Activated naive CD8-positive, alpha-beta T cell treated with anti-CD3 and anti-CD28 coated beads, Interleukin-2, amount 10 ng/mL, durations not matched to agents 7 days and 5 days (primary cell): ENCODE measurements at regions of chr21 and their contacts with region 1.

Region 1: DNA sequence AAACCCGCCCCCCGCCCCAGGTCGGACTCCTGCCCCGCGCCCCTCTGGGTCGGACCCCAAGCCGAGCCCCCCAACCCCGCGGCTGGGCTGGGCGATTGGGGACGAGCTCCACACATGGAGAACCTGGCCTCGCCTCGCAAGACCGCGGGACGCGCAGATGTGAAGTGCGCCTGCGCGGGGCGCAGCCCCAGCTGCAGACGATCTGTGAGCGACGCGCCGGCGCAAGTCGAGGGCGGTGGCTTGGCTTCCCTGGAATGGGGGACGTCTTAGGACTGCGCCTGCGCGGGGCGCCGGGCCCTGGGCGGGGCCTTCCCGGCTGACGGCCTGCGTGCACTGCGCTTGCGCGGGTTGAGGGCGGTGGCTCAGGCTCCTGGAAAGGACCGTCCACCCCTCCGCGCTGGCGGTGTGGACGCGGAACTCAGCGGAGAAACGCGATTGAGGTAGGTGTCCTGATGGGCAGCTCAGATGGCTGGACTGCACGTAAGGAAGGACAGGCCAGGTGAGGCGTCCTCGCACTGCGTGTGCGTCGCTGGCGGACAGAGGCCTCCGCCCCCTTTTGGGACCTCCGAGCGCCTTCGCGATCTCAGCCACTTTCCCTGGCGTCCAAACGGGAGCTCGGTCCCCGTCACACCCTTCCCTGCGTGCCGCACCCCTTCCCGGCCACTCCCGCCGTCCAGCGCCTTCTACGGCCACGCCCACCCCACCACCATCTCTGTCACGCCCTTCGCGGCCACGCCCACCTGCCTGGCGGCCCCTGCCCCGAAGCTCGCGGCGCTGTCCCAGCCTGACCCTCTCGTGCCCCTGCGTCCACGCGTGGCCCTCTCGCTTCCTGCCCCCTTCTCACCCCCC is at the start of gene PRMT2:
- DNase-seq: peak; percentile 100
- ATAC-seq: peak; percentile 92
- H3K4me3 Mint-ChIP-seq: peak within 1 kb of the TSS; percentile 89
- H3K27ac Mint-ChIP-seq: peak within 1 kb of the TSS; percentile 94
- H3K4me1 Mint-ChIP-seq: peaks cover 60% of the 10 kb centered on the region
- H3K27me3 Mint-ChIP-seq: no peaks in the 10 kb centered on the region
- total RNA-seq, gene PRMT2: 153 to 157 TPM

Region 2: GRCh38 chr21:46458315-46459023 is 177.1 kb before region 1 on chr21 and contains the start of gene DIP2A:
- POLR2A ChIA-PET with region 1: interaction called, 24 read pairs
- DNase-seq: peak; percentile 98
- ATAC-seq: peak; percentile 97
- H3K4me3 Mint-ChIP-seq: peak within 1 kb of the TSS; percentile 92
- H3K27ac Mint-ChIP-seq: peak within 1 kb of the TSS; percentile 91
- H3K4me1 Mint-ChIP-seq: peaks cover 44% of the 10 kb centered on the region
- H3K27me3 Mint-ChIP-seq: no peaks in the 10 kb centered on the region
- total RNA-seq, gene DIP2A: 78.7 to 78.8 TPM

Region 3: DNA sequence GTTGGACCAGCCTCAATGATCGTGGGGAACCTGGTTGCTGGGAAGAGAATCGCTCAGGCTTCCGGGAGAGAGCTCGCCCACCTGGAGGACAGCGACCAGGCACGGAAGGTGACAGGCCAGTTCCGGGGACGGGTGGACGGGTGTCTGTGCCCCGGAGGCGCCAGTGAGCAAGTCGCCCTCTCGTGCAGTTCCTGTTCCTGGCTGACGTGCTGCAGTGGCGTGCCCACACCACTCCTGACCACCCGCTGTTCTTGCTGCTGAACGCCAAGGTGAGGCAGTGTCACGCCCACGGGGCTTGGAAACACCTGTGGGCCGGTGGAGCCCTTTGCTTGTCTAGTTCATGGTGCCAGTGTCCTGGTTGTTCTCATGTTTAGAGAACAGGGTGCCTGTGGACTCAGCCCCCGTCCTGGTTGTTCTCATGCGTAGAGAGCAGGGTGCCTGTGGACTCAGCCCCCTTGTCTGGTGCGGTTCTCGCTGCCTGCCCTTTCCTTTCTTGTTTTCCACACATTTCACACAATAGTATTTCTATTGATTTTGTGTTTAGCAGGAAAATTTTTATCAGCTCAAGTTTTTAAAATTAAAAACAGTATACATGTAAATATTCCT is 83.8 kb before region 1 on chr21:
- POLR2A ChIA-PET with region 1: interaction called, 43 read pairs
- DNase-seq: peak; percentile 66
- ATAC-seq: peak; percentile 60
- H3K4me3 Mint-ChIP-seq: peak overlapping the region; percentile 76
- H3K27ac Mint-ChIP-seq: peak overlapping the region; percentile 93
- H3K4me1 Mint-ChIP-seq: peaks cover 40% of the 10 kb centered on the region
- H3K27me3 Mint-ChIP-seq: no peaks in the 10 kb centered on the region

Region 4: DNA sequence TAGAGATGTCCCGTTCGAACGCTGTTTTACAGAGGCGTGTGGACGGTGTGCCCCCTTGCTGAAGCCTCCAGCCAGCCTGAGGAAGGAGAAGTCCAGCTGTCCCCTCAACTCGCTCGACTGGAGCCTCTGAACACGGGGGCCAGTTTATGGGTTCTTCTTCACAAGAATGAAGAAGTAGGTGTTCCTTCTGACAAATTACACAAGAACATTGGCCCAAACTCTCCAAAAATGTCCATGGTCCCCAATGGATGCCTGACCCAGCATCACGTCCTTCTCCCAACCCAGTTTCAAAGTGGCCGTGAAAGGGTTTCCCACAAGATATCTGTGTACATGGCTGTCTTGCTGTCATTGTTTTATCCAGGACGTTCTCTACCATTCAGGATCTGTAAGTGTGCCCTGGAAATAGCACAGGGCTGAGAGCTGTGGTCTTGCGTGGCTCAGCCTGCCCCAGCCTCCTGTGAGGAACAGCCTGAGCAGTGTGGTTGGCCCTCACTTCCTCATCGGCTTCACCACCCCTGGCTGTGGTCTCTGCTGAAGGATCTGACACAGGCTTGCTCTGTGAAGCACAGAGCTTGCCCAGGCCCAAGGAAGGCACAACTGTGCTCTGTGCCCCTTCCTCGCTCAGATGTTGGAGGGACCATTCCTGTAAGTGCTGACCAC is 29.7 kb before region 1 on chr21:
- POLR2A ChIA-PET with region 1: interaction called, 59 read pairs
- DNase-seq: peak; percentile 75
- ATAC-seq: peak; percentile 95
- H3K4me3 Mint-ChIP-seq: peak overlapping the region; percentile 76
- H3K27ac Mint-ChIP-seq: peak overlapping the region; percentile 96
- H3K4me1 Mint-ChIP-seq: peaks cover 37% of the 10 kb centered on the region
- H3K27me3 Mint-ChIP-seq: no peaks in the 10 kb centered on the region

Region 5: DNA sequence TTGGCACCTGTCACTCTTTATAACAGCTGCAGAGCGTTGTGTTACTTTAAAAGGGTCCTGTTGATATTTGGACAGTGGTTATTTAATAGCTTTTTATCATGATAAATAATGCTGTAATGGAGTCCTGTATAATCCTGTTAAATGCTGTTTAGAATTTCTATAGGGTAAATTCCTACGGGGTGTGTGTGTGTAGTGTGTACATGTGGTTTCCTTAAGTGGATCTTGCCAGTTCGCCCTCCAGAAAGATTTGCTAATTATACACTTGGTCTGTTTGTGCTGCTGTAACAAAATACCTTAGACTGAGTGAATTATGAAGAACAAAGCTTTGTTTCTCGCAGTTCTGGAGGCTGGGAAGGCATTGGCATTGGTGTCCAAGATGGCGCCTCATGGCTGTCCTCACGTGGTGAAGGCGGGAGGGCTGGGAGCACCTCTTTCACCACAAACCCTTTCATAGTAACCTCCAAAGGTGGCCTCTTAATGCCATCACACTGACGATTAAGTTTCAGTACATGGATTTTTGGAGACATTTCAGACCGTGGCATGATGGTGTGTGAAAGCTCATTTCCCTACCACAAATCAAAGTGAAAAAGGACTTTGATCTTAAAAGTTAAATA is 11.1 kb after region 1 on chr21:
- POLR2A ChIA-PET with region 1: interaction called, 14 read pairs
- DNase-seq: no peak
- ATAC-seq: no peak
- H3K4me3 Mint-ChIP-seq: no peak overlapping the region
- H3K27ac Mint-ChIP-seq: no peak overlapping the region
- H3K4me1 Mint-ChIP-seq: peaks cover 11% of the 10 kb centered on the region
- H3K27me3 Mint-ChIP-seq: no peaks in the 10 kb centered on the region

Region 6: DNA sequence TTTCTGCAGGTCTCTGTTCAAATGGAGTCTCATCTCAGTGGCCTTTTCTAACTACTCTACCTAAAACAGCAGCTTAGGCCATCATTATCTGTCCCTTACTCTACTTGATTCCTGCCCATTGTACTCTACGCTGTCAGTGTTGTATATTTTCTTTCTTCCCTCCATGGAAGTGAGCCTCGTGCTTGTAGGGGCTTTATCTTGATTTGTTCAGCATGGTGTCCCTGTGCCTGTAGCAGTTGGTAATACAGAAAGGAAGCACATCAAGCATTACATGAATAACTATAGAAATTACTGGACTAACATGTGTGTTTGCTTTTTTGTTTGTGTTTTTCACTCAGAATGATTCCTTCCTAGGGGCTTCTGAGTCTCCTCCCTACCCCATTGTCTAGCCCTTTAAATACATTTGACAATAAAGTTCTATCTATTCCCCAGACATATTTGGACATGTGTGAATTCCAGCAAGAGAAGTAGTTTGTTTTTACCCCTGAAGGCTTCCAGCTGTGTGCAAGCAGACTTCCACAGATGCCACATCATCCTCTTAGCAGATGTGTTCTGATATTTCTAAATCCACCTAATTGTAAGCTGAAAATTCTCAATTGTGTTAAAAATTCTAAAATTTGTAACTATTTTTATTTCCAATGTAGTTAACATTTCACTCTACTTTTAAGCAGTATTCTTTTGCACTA is 40.2 kb after region 1 on chr21:
- POLR2A ChIA-PET with region 1: no interaction called
- DNase-seq: no peak
- ATAC-seq: no peak
- H3K4me3 Mint-ChIP-seq: no peak overlapping the region
- H3K27ac Mint-ChIP-seq: no peak overlapping the region
- H3K4me1 Mint-ChIP-seq: peaks cover 2% of the 10 kb centered on the region
- H3K27me3 Mint-ChIP-seq: peaks cover 7% of the 10 kb centered on the region